ENCODE measurements at regions of chr2 and their contacts with region 1.

Region 1: DNA sequence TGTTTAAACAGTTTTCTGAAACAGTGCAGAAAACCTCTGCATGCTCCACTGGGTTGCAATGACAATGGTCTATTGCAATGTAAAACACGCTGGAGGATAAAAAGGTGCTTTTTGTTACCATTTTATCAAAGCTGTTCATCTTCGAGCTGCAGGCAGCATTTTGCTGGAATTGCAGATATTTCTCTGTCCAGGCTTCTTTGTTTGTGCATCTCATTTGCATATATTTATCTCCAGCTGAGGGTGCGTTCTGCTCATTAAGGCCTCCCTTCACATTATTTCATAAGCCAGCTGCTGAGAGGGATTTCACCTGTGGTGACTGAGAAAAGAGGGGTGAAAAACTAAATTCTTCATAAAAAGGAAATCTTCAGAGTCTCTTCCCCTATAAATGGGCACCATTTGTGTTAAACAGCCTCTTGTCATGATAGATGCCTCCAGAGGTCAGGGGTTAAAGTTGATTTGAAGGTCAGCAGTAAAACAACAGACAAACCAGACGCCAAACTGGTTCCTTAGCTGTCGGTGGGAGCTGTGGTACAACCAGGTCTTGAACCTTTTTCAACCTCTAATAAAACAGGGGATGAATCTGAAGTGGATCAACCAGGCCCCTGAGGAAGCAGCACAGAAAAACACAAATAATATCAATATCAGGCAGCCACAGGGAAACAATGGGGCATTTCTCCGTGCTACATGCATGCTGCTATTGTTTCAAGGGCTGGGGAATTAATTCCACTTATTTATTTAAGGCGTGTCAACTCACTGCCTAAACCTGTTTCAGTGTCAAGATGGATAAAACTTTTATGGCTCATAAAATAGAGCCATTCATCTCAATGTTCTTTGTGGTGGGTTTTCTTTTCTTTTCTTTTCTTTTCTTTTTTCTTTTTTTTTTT is 265.1 kb downstream of the MEIS1 start:
- DNase-seq: no peak
- H3K4me3 ChIP-seq: peak overlapping the region; percentile 16
- H3K27ac ChIP-seq: no peak overlapping the region
- H3K4me1 ChIP-seq: peaks cover 4% of the 10 kb centered on the region
- H3K27me3 ChIP-seq: no peaks in the 10 kb centered on the region
- CTCF ChIP-seq: no peak
- EP300 ChIP-seq: no peak
- POLR2A ChIP-seq: no peak

Region 2: GRCh38 chr2:66387016-66387753 is 312.9 kb before region 1 on chr2:
- intact Hi-C with region 1: no loop called
- DNase-seq: no peak
- H3K4me3 ChIP-seq: no peak overlapping the region
- H3K27ac ChIP-seq: no peak overlapping the region
- H3K4me1 ChIP-seq: no peaks in the 10 kb centered on the region
- H3K27me3 ChIP-seq: no peaks in the 10 kb centered on the region
- CTCF ChIP-seq: no peak
- EP300 ChIP-seq: no peak
- POLR2A ChIP-seq: no peak

Region 3: DNA sequence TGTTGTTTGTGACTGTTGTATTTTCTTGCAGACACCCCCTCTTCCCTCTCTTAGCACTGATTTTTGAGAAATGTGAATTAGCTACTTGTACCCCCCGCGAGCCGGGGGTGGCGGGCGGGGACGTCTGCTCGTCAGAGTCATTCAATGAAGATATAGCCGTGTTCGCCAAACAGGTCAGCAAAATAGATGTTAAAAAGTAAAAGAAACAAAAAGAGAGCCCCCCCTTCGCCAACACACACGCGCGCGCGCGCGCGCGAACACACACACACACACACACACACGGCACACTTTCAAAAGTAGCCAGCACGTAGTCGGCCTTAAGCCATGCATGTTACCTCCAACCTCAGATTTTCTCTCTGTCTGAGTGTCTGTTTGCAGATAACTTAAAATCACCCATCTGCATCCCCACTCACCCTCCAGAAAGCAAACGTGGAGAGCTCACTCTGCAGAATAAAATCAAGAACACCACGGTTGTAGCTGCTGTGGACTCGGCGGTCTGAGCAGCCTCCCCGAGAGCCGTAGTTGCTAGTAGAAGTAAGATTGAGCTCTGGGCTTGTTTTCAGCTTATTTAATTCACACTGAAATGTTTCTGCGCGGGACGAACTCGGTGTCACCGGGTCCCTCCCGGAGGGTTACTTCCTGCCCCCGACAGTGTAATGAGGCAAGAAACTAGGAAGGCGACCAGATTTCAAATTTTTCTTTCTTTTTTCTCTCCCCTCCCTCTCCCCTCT is 260.1 kb before region 1 on chr2:
- intact Hi-C with region 1: loop called (anchors 2 to 10 kb)
- DNase-seq: peak in 4 of 5 donors; percentile 38 to 52 (median 44)
- H3K4me3 ChIP-seq: peak overlapping the region; percentile 80
- H3K27ac ChIP-seq: peak overlapping the region; percentile 89 to 93
- H3K4me1 ChIP-seq: peaks cover 2% of the 10 kb centered on the region
- H3K27me3 ChIP-seq: no peaks in the 10 kb centered on the region
- CTCF ChIP-seq: no peak
- EP300 ChIP-seq: no peak
- POLR2A ChIP-seq: no peak

Region 4: DNA sequence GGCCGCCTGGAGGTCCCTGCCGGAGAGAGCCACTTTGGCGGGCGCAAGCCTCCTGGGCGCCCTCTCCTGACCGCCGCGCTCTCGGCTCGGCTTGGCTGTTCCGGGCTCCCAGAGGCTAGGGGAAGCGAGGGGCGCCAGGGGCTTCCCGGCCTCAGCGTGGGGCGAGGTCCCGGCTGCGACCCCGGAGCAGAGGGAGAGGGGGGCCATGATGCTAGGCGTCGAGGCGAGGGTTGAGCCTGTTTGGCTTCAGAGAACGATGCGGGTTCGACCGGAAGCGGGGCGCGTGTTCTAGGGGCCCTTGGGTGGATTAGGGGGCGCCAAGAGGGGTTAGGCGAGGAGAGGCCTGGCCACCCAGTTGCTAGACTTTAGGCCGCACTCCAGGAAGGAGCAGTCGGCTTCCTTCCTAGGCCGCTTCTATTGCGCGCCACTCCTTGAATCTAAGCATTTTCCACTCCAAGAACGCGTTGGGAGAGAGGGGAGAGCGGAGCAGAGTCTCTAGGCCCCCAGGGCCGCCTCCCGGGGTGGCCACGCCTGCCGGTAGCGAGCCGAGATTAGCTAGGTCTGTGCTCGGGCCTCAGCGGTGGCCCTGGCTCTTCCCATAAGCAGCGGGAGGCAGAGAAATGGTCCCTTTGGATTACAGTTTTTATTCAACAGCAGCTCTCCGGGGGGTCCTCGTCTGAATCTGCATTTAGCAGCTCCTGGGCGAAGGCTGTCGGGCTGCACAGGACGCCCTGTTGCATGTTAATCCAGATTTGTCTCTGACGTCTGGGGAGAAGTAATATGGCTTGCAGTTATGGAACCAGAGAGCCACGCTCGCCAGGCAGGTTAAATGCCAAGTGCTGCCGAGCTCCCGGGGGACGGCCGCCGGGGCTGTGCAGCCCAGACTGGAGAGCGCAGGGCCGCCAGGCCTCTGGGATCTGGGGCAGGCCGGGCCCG is 253.8 kb before region 1 on chr2:
- intact Hi-C with region 1: loop called in 2 of 4 experiments (anchors 5 to 10 kb)
- DNase-seq: peak; percentile 46 to 78 (median 62)
- H3K4me3 ChIP-seq: peak overlapping the region; percentile 49
- H3K27ac ChIP-seq: peak overlapping the region; percentile 81 to 86
- H3K4me1 ChIP-seq: no peaks in the 10 kb centered on the region
- H3K27me3 ChIP-seq: no peaks in the 10 kb centered on the region
- CTCF ChIP-seq: no peak
- EP300 ChIP-seq: no peak
- POLR2A ChIP-seq: no peak

Region 5: DNA sequence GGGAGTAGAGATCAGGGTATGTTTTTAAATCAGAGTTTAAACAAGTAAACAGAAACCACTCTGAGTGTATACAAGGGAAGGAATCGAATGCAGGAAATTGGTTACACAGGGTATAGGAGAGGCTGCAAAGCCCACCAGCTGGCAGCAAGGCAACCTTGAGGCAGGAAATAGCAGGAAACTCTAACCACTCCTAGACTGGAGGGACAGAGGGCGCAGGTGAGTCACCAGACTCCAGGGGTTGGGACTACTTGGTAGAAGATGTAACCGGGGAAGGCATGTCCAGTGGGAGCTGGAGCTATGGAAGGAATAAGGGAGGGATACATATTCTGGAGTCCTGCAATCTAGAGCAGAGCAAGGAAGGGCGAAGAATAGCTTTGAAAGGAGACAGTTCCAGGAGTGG is 112.8 kb before region 1 on chr2:
- intact Hi-C with region 1: loop called in 1 of 4 experiments (anchors 10 kb)
- DNase-seq: peak in 2 of 5 donors; percentile 38 to 54
- H3K4me3 ChIP-seq: no peak overlapping the region
- H3K27ac ChIP-seq: no peak overlapping the region
- H3K4me1 ChIP-seq: no peaks in the 10 kb centered on the region
- H3K27me3 ChIP-seq: no peaks in the 10 kb centered on the region
- CTCF ChIP-seq: no peak
- EP300 ChIP-seq: no peak
- POLR2A ChIP-seq: no peak

Measured in ovary (tissue), 10 donors.